ENCODE measurements at regions of chr1 and their contacts with region 1.

Region 1: DNA sequence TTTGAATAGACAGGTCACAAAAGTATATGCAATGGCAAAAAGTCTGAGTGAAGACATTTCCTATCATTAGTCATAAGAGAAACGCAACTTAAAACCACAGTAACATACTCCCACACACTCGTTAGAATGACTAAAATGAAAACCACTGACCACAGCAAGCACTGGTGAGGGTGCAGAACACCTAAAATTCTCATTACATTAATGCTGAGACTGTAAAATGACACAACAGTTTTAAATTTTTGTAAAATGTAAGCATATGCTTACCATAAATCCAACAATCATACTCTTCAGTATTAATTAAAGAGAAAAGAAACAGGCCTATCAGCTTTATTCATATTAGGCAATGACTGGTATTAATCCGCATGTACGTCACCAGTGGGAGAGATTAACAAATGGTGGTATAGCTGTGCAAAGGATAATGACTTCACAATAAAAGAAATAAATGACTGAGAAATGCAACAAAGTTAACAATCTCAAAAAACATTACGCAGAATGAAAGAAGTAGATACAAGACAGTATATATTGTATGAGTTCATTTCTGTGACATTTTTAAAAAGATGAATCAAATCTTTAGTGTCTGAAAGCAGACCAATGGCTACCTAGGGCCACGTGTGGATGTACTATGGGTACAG is 253.5 kb downstream of the AKT3 start:
- DNase-seq: no peak
- H3K4me3 Mint-ChIP-seq: peak overlapping the region; percentile 57
- H3K27ac Mint-ChIP-seq: peak overlapping the region; percentile 86
- H3K4me1 Mint-ChIP-seq: peaks cover 48% of the 10 kb centered on the region
- H3K27me3 Mint-ChIP-seq: no peaks in the 10 kb centered on the region

Region 2: GRCh38 chr1:243416495-243416894 is 180.1 kb before region 1 on chr1:
- intact Hi-C with region 1: loop called (anchors 2 kb)
- DNase-seq: no peak
- H3K4me3 Mint-ChIP-seq: peak overlapping the region; percentile 40
- H3K27ac Mint-ChIP-seq: peak overlapping the region; percentile 65
- H3K4me1 Mint-ChIP-seq: peaks cover 63% of the 10 kb centered on the region
- H3K27me3 Mint-ChIP-seq: no peaks in the 10 kb centered on the region

Region 3: DNA sequence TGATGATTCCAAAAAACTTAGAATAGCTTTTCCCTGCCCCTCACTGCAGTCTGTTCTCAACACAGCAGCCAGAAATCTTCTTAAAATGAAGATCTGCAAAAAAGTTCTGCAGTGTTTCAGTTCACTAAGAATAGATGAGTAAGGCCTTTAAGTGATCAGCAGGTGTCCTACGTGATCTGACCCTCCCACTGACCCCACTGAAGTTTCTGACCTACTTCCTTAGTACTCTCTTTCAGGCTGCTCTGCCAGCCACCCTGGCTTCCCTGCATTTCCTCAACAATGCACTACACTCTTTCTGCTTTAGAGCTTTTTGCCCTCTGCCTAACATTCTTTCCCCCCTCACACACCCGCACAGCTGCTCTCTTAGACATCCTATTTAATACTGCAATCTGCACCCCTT is 71.0 kb after region 1 on chr1:
- intact Hi-C with region 1: no loop called
- DNase-seq: no peak
- H3K4me3 Mint-ChIP-seq: no peak overlapping the region
- H3K27ac Mint-ChIP-seq: no peak overlapping the region
- H3K4me1 Mint-ChIP-seq: no peaks in the 10 kb centered on the region
- H3K27me3 Mint-ChIP-seq: no peaks in the 10 kb centered on the region

Region 4: DNA sequence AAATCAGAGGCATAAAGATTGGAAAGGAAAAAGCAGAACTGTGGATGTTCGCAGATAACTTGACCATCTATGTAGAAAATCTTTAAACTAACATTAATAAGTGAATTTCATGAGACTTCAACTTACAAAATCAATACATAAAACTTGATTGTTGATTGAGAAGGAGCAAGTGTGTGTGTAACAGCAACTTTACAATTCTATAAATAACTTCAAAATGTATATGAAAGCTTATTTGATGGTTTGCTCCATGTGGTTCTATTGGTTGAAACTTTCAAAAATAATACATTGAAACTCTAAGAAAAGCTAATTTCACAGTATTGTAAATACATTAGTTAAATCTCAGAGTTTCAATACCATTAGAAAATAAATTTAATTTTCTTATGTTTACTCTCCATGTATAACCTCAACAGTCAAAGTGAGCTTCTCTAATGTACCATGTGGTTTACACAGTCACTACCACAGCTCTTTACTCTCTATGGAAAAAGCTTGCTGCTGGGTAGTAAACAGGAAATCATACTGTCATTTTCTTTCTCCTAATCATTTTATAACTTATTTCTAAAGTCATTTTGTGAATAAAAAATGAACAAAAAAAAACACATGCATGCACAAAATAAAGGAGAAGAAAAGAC is 241.5 kb after region 1 on chr1:
- intact Hi-C with region 1: loop called (anchors 1 kb)
- DNase-seq: no peak
- H3K4me3 Mint-ChIP-seq: no peak overlapping the region
- H3K27ac Mint-ChIP-seq: peak overlapping the region; percentile 27
- H3K4me1 Mint-ChIP-seq: peaks cover 22% of the 10 kb centered on the region
- H3K27me3 Mint-ChIP-seq: no peaks in the 10 kb centered on the region

Measured in activated T-helper 2 cell treated with anti-CD3 and anti-CD28 coated beads, Interferon-gamma antibody, Interleukin-2, Interleukin-4, amounts not matched to agents 10 μg/mL and 5 μg/mL and 100 μg/mL, durations not matched to agents 14 hours and 24 hours and 36 hours (primary cell).